Psoas muscle (tissue), 8 donors: ENCODE measurements at regions of chr14 and their contacts with region 1.

Region 1: DNA sequence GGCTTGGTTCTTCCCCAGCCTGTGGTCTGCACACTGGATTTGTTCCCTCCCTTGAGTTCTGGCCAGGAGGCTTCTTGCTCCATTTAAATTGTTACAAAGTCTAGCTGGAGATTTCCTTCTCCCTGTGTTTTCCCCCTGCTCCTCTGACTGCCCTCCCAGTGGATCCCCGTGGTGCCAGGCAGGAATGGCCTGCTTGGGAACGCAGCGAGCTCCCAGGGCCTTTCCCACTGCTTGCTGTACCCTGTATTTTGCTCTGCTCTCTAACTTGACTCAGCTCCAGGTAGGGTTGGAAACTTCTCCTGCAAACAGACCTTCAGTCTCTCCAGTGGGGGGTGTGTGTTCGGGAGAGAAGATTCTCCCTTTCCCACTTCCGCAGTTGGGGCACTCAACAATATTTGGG is 349.2 kb upstream of the FBXO33 start:
- DNase-seq: no peak
- ATAC-seq: no peak
- H3K4me3 ChIP-seq: no peak overlapping the region
- H3K27ac ChIP-seq: no peak overlapping the region
- H3K4me1 ChIP-seq: no peaks in the 10 kb centered on the region
- H3K27me3 ChIP-seq: no peaks in the 10 kb centered on the region
- CTCF ChIP-seq: no peak

Region 2: DNA sequence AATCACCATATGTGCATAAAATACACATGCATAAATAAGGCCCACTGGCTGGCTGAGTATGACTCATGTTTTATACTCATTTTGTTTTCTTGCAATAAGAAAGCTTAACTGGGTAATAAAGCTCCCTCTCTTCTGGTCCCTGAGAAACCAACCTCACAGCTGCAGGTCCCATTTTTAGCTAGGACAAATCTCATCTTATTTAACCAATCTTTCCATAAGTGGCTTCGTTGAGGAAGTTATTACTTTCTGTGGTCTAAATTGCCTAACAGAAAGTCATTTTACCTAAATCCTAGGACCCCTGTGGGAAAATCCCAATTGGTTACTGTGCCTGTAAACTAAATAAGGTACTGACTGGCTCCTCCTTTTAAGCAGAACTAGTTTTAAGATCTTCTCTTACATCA is 116.4 kb before region 1 on chr14:
- intact Hi-C with region 1: no loop called
- DNase-seq: no peak
- ATAC-seq: no peak
- H3K4me3 ChIP-seq: no peak overlapping the region
- H3K27ac ChIP-seq: no peak overlapping the region
- H3K4me1 ChIP-seq: no peaks in the 10 kb centered on the region
- H3K27me3 ChIP-seq: no peaks in the 10 kb centered on the region
- CTCF ChIP-seq: no peak

Region 3: DNA sequence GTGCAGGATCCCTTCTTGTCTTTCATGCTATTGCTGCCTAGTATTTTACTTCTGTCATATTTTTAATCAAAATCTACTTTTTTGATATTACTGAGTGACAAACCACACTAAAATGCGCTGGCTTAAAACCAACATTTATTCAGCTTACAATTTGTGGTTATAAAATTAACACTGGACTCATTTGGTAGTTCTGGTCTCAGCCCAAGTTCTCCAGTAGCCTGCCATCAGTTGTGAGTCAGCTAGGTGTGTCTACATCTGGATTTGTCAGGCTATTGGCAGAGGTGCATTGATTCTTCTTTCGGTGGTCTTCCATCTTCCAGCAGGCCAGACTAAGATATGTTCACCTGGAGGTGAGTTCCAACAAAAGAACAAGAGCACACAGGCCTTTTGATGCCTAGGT is 415.9 kb after region 1 on chr14:
- intact Hi-C with region 1: loop called in 1 of 2 experiments (anchors 10 kb)
- DNase-seq: no peak
- ATAC-seq: no peak
- H3K4me3 ChIP-seq: no peak overlapping the region
- H3K27ac ChIP-seq: no peak overlapping the region
- H3K4me1 ChIP-seq: no peaks in the 10 kb centered on the region
- H3K27me3 ChIP-seq: no peaks in the 10 kb centered on the region
- CTCF ChIP-seq: no peak